Cardiac septum (tissue), 1 donor: ENCODE measurements at regions of chr3 and their contacts with region 1.

Region 1: GRCh38 chr3:86771741-86772503 is 219.0 kb downstream of the VGLL3 start:
- DNase-seq: no peak

Region 2: GRCh38 chr3:86282106-86282787 is 489.7 kb before region 1 on chr3:
- intact Hi-C with region 1: no loop called
- DNase-seq: peak; percentile 71

Region 3: DNA sequence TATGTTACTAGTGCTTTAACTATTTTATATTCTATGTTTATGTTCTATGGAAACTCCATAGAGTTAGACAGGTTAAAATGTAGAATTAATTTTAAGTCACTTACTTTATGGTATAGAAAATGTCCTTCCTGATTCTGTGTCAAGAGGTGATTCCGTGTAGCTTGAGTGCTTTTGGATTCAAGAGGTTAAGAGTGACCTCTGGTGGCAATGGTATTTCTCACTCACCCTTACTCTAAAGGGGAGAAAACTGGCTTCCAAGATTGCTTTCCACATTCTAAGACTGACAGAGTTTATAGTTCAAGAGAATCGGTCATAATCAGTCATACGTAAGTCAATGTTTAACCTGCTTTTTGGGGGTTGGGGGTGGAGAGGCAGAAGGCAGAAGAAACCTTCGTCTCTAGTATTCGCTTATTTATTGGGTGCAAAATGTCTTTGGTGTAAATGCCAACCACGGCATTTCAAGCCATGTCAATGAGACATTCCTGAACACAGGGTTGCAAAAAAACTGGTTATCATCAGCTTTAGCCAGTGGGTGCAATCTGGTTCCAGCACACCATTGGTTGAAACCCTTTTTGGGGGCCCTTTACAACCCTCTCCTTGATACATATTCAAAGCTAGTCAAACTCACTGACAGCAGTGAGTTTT is 311.0 kb after region 1 on chr3:
- intact Hi-C with region 1: loop called (anchors 2 kb)
- DNase-seq: no peak

Region 4: GRCh38 chr3:87167628-87168456 is 395.9 kb after region 1 on chr3:
- intact Hi-C with region 1: loop called (anchors 2 kb)
- DNase-seq: no peak